Activated T-helper 1 cell treated with anti-CD3 and anti-CD28 coated beads, Interleukin-12 subunit alpha, Interleukin-12 subunit beta, Interleukin-2, Interleukin-4 antibody, amounts not matched to agents 30 ng/mL and 10 ng/mL and 1 ng/mL, durations not matched to agents 14 hours and 24 hours and 36 hours (primary cell): ENCODE measurements at regions of chr7 and their contacts with region 1.

Region 1: DNA sequence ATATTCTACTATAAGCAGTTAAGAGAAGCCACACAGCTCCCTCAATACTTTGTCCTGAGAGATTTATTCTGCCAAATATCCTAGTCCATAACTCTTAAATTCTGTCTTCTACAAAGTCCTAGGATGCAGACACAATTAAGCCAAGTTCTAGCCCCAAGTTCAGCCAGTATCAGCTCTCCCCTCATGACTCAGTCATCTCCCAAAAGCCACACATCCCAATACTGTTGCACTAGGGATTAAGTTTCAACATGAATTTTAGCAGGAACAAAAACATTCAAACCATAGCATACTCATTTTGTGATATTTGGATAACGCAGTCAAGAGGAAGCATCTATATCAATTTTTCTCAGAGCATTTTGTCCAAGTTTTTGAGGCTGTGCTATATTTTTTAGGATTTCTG is 277.4 kb downstream of the FZD1 start:
- DNase-seq: no peak
- H3K4me3 Mint-ChIP-seq: no peak overlapping the region
- H3K27ac Mint-ChIP-seq: no peak overlapping the region
- H3K4me1 Mint-ChIP-seq: no peaks in the 10 kb centered on the region
- H3K27me3 Mint-ChIP-seq: no peaks in the 10 kb centered on the region

Region 2: GRCh38 chr7:91557789-91558392 is 16.2 kb after region 1 on chr7:
- intact Hi-C with region 1: no loop called
- DNase-seq: no peak
- H3K4me3 Mint-ChIP-seq: no peak overlapping the region
- H3K27ac Mint-ChIP-seq: peak overlapping the region; percentile 36
- H3K4me1 Mint-ChIP-seq: peaks cover 5% of the 10 kb centered on the region
- H3K27me3 Mint-ChIP-seq: peaks cover 6% of the 10 kb centered on the region

Region 3: DNA sequence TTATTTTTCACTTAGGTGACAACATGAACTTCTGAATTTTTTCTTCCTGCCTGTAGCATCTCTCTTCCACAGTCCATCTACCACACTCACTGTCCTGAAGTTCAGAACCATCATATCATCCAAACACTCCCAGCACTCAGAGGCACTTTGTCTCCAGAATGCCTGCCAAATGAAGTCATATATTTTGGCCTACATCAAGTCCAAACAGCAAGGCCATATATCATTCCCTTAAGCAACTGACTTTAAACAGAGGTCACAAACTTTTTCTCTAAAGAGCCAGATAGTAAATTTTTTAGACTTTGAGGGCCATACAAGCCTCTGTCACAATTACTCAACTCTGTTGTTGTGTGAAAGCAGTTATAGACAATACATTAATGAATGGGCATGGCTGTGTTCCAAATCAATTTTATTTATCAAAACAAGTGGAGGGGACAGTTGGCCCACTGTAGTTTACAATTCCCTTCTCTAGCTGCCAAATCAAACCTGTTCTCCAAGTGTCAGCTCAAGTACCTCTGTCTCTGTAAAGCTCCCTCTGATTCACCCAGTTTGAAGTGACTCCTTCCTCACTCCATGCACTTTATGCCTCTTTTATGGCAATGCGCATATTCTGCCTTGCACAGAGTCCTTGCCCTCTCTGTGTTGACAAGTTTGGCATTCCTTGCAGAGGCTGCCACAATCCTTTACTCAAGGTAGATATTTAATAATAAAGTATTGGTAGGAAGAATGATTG is 28.3 kb after region 1 on chr7:
- intact Hi-C with region 1: no loop called
- DNase-seq: no peak
- H3K4me3 Mint-ChIP-seq: no peak overlapping the region
- H3K27ac Mint-ChIP-seq: no peak overlapping the region
- H3K4me1 Mint-ChIP-seq: no peaks in the 10 kb centered on the region
- H3K27me3 Mint-ChIP-seq: peaks cover 8% of the 10 kb centered on the region

Region 4: DNA sequence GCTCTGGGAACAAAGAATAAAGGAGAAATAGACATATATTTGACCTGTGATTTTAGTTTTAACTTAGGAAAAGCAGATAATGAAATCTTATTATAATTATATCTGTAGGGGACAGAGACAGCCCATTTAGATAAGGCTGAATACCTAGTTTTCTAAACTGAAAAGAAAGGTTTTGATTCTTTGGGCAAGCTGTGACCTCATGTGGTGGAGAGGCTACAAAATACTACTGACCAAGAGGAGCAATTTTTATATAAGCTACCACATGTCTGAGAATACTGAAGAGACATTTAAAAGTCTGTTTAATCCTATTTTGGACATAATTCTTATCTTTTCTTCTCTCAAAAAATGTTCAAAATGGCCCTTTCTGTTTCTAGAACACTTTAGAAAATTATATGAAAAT is 67.9 kb after region 1 on chr7:
- intact Hi-C with region 1: loop called (anchors 10 kb)
- DNase-seq: no peak
- H3K4me3 Mint-ChIP-seq: no peak overlapping the region
- H3K27ac Mint-ChIP-seq: no peak overlapping the region
- H3K4me1 Mint-ChIP-seq: no peaks in the 10 kb centered on the region
- H3K27me3 Mint-ChIP-seq: peaks cover 5% of the 10 kb centered on the region